Activated CD4-positive, alpha-beta memory T cell treated with anti-CD3 and anti-CD28 coated beads, Interleukin-2, amount 10 ng/mL, durations not matched to agents 7 days and 5 days (primary cell): ENCODE measurements at regions of chr2 and their contacts with region 1.

Region 1: DNA sequence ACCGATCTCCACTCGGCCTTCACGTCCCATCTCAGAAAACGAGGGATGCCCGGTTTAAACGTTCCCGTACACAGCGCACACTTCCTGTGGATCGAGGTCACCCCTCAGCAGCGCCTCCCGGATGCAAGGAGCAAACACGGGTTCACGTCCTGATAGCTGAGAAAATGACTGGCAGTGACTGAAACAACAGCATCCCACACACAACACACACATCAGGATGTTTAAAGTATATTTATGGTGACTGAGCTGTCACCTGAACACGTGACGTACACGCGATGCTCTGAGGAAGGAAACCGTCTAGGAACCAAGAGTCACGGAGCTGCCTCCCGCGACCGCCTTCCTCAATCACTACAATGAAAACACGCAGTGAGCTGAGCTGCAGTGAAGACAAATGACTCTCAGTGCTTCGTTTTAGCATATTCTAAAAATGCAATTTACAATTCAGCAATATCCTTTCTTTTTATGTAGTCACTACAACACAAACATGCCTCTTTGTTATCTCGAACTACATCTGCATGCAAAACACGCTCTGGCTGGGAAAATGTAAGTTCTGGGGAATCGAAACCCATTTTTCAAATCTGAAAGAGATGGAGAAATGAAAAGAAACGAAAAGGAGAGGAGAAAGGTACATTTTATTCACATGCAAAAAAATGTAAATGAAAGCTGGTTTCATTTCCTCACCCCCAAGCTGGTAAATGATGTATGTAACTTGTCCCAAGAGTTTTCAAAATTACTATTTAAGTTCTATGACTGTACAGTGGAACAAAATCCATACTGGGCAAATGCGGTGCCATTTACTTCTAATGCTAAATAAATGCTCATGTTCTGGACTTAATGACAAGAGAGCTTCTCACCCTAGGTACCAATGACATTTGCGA is 19.8 kb downstream of the HDAC4 start:
- DNase-seq: peak; percentile 77
- H3K4me3 Mint-ChIP-seq: peak overlapping the region; percentile 66
- H3K27ac Mint-ChIP-seq: peak overlapping the region; percentile 93
- H3K4me1 Mint-ChIP-seq: peaks cover 31% of the 10 kb centered on the region
- H3K27me3 Mint-ChIP-seq: no peaks in the 10 kb centered on the region

Region 2: GRCh38 chr2:239348563-239349447 is 32.3 kb before region 1 on chr2:
- CTCF ChIA-PET with region 1: no interaction called
- POLR2A ChIA-PET with region 1: no interaction called
- DNase-seq: no peak
- H3K4me3 Mint-ChIP-seq: no peak overlapping the region
- H3K27ac Mint-ChIP-seq: no peak overlapping the region
- H3K4me1 Mint-ChIP-seq: no peaks in the 10 kb centered on the region
- H3K27me3 Mint-ChIP-seq: no peaks in the 10 kb centered on the region

Region 3: GRCh38 chr2:239369631-239370161 is 11.4 kb before region 1 on chr2:
- CTCF ChIA-PET with region 1: interaction called, 6 read pairs
- POLR2A ChIA-PET with region 1: interaction called, 10 read pairs
- DNase-seq: peak; percentile 81
- H3K4me3 Mint-ChIP-seq: peak overlapping the region; percentile 63
- H3K27ac Mint-ChIP-seq: no peak overlapping the region
- H3K4me1 Mint-ChIP-seq: peaks cover 10% of the 10 kb centered on the region
- H3K27me3 Mint-ChIP-seq: no peaks in the 10 kb centered on the region